Activated CD4-positive, alpha-beta T cell treated with anti-CD3 and anti-CD28 coated beads for 36 hours (primary cell): ENCODE measurements at regions of chrX and their contacts with region 1.

Region 1: DNA sequence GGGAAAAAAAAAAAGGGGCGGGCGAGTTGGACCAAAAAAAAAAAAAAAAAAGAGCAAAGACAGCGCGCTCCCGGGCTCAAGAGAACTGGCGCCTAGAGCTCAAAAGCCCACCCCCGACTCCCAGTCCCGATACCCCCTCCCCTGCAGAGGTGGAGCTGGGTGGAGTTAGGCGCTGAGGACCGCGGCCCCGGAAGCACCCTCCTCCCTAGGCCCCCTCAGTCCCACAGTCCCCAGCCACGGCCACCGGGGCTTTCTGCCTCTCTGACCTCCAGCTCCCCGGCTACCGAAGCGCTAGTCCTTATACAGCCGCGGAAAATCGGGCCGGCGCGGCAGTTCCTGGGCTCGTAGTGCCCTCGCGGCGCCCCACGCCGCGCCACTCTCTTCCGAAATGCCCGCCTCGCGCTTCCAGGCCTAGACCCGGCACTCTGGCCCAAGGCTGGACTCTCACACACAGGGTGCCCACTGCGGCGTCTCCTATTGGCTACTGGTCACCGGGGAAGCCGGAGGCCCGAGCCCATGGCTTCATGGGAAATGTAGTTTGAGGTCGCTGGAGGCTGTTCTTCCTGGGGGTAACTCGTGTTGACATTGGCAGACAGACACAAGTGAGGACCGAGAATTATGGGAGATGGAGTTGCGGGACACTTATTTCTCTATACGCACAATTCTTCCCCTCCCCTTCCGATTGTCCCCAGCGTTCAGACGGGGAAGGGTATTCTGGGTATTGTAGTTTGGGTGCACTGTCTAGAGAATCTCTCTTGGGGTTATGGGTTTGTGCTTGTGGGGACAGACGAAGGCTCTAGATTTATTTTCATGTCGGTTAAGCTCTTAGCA is at the start of gene ENOX2:
- DNase-seq: peak; percentile 86
- ATAC-seq: peak; percentile 98
- H3K4me3 Mint-ChIP-seq: no peak within 1 kb of the TSS
- H3K27ac Mint-ChIP-seq: peak within 1 kb of the TSS; percentile 80
- H3K4me1 Mint-ChIP-seq: peaks cover 5% of the 10 kb centered on the region
- H3K27me3 Mint-ChIP-seq: peaks cover 2% of the 10 kb centered on the region
- total RNA-seq, gene ENOX2: 12.5 to 16.5 TPM

Region 2: DNA sequence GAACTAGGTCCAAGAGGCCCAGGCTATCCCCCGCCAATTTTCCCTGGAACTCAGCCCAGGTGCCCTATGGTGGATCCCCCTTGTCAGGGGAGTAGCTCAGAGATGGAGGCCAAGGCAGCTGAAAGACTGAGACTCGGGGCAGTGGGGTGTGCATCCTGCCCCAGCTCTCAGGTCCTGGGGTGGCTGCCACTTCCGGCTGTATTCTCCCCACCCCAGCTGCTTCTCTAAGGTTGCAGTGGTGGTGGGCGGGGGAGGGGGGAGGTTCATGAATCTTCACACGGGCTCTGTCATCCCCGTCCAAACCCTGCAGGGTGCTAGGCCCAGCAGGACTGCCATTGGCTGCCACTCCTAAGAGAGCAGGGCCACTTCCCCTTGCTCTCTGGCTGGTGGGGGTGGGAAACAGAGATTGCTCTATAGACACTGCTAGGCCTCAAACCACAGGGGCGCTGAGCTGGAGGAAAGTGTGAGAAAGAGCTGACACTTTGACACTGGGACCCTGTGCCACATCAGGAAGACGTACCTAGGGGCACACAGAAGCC is 1121.8 kb before region 1 on chrX:
- CTCF ChIA-PET with region 1: no interaction called
- POLR2A ChIA-PET with region 1: no interaction called
- intact Hi-C with region 1: loop called in 1 of 2 experiments (anchors 5 kb)
- DNase-seq: peak; percentile 91
- ATAC-seq: peak; percentile 80
- H3K4me3 Mint-ChIP-seq: peak overlapping the region; percentile 79
- H3K27ac Mint-ChIP-seq: peak overlapping the region; percentile 97
- H3K4me1 Mint-ChIP-seq: peaks cover 50% of the 10 kb centered on the region
- H3K27me3 Mint-ChIP-seq: no peaks in the 10 kb centered on the region

Region 3: DNA sequence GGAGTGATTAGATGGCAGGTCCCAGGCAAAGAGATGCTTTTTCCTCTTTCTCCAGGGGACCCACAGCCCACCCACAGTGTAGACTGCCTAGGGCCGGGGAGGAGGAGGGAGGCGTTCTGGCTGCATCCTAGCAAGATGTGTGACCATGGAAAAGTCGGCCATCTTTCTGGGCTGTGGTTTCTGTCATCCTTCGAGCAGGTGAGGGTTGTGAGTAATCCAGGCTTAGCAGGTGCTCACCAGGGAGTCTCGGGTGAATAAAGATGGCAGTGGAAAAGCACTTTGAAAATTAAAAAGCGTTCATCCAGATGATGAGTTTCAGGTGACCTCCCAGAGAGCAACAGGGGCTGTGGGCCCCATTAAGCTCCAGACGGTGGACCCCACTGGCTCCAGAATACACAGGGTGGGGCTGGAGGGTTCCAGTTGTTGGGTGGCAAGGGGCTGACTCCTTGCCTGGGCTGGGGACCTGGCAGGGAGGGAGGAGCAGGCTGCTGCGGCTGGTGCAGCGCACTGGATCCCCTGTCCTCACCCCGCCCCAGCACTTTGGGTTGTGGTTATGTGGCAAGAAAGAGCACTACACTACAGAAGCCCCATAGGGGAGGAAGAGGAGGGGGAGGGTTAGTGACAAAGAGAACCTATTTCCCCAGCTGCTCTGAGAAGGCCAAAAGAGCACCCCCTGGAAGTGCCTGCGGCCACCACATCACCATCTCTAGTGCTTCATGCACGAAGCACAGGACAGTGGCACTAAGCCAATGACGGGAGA is 816.4 kb before region 1 on chrX:
- CTCF ChIA-PET with region 1: no interaction called
- POLR2A ChIA-PET with region 1: no interaction called
- intact Hi-C with region 1: loop called in 1 of 2 experiments (anchors 5 kb)
- DNase-seq: peak; percentile 85
- ATAC-seq: peak; percentile 53
- H3K4me3 Mint-ChIP-seq: peak overlapping the region; percentile 74
- H3K27ac Mint-ChIP-seq: peak overlapping the region; percentile 94
- H3K4me1 Mint-ChIP-seq: peaks cover 82% of the 10 kb centered on the region
- H3K27me3 Mint-ChIP-seq: no peaks in the 10 kb centered on the region

Region 4: GRCh38 chrX:130339408-130340222 is 563.4 kb before region 1 on chrX and contains the start of gene SLC25A14:
- CTCF ChIA-PET with region 1: no interaction called
- POLR2A ChIA-PET with region 1: no interaction called
- intact Hi-C with region 1: loop called (anchors 1 to 5 kb)
- DNase-seq: peak; percentile 82
- ATAC-seq: peak; percentile 88
- H3K4me3 Mint-ChIP-seq: peak within 1 kb of the TSS; percentile 87
- H3K27ac Mint-ChIP-seq: peak within 1 kb of the TSS; percentile 94
- H3K4me1 Mint-ChIP-seq: peaks cover 14% of the 10 kb centered on the region
- H3K27me3 Mint-ChIP-seq: no peaks in the 10 kb centered on the region
- total RNA-seq, gene SLC25A14: 9.6 to 11.0 TPM

Region 5: GRCh38 chrX:130401415-130402207 is 501.4 kb before region 1 on chrX and contains the start of gene RBMX2:
- CTCF ChIA-PET with region 1: no interaction called
- POLR2A ChIA-PET with region 1: no interaction called
- intact Hi-C with region 1: loop called in 1 of 2 experiments (anchors 1 kb)
- DNase-seq: peak; percentile 79
- ATAC-seq: peak; percentile 93
- H3K4me3 Mint-ChIP-seq: peak within 1 kb of the TSS; percentile 93
- H3K27ac Mint-ChIP-seq: peak within 1 kb of the TSS; percentile 92
- H3K4me1 Mint-ChIP-seq: peaks cover 13% of the 10 kb centered on the region
- H3K27me3 Mint-ChIP-seq: peaks cover under 1% of the 10 kb centered on the region
- total RNA-seq, gene RBMX2: 25.4 to 26.8 TPM